ENCODE measurements at regions of chr12 and their contacts with region 1.

Region 1: GRCh38 chr12:39619660-39620433 is at the start of gene ABCD2:
- DNase-seq: peak; percentile 80 to 88 (median 85)
- H3K4me3 ChIP-seq: peak within 1 kb of the TSS; percentile 83 to 85
- H3K4me3 Mint-ChIP-seq: no peak within 1 kb of the TSS
- H3K27ac ChIP-seq: peak within 1 kb of the TSS; percentile 87
- H3K27ac Mint-ChIP-seq: no peak within 1 kb of the TSS
- H3K4me1 ChIP-seq: peaks cover 42% of the 10 kb centered on the region
- H3K4me1 Mint-ChIP-seq: peaks cover 28 to 46% (median 33%) of the 10 kb centered on the region in 4 donors
- H3K27me3 ChIP-seq: no peaks in the 10 kb centered on the region
- H3K27me3 Mint-ChIP-seq: no peaks in the 10 kb centered on the region
- total RNA-seq, gene ABCD2: 19.0 to 20.1 TPM

Region 2: GRCh38 chr12:39319187-39319586 is 300.7 kb before region 1 on chr12:
- CTCF ChIA-PET with region 1: interaction called, 3 read pairs
- POLR2A ChIA-PET with region 1: no interaction called
- intact Hi-C with region 1: loop called (anchors 2 kb)
- DNase-seq: peak in 1 of 5 donors; percentile 14
- H3K4me3 ChIP-seq: no peak overlapping the region
- H3K4me3 Mint-ChIP-seq: no peak overlapping the region
- H3K27ac ChIP-seq: no peak overlapping the region
- H3K27ac Mint-ChIP-seq: peak overlapping the region in 1 of 7 donors; percentile 47
- H3K4me1 ChIP-seq: no peaks in the 10 kb centered on the region
- H3K4me1 Mint-ChIP-seq: peaks cover 0 to 2% (median 0%) of the 10 kb centered on the region in 4 donors
- H3K27me3 ChIP-seq: no peaks in the 10 kb centered on the region
- H3K27me3 Mint-ChIP-seq: no peaks in the 10 kb centered on the region

Region 3: GRCh38 chr12:39587225-39587624 is 32.6 kb before region 1 on chr12:
- CTCF ChIA-PET with region 1: interaction called, 12 read pairs
- POLR2A ChIA-PET with region 1: interaction called, 11 read pairs
- intact Hi-C with region 1: loop called (anchors 1 kb)
- DNase-seq: peak; percentile 36 to 50 (median 40)
- H3K4me3 ChIP-seq: no peak overlapping the region
- H3K4me3 Mint-ChIP-seq: no peak overlapping the region
- H3K27ac ChIP-seq: no peak overlapping the region
- H3K27ac Mint-ChIP-seq: no peak overlapping the region
- H3K4me1 ChIP-seq: no peaks in the 10 kb centered on the region
- H3K4me1 Mint-ChIP-seq: peaks cover 3 to 7% (median 5%) of the 10 kb centered on the region in 4 donors
- H3K27me3 ChIP-seq: no peaks in the 10 kb centered on the region
- H3K27me3 Mint-ChIP-seq: no peaks in the 10 kb centered on the region

Region 4: GRCh38 chr12:39605501-39605900 is 14.3 kb before region 1 on chr12:
- CTCF ChIA-PET with region 1: interaction called, 14 read pairs
- POLR2A ChIA-PET with region 1: interaction called, 28 read pairs
- intact Hi-C with region 1: loop called (anchors 1 kb)
- DNase-seq: no peak
- H3K4me3 ChIP-seq: no peak overlapping the region
- H3K4me3 Mint-ChIP-seq: no peak overlapping the region
- H3K27ac ChIP-seq: no peak overlapping the region
- H3K27ac Mint-ChIP-seq: peak overlapping the region in 2 of 7 donors; percentile 14 to 43
- H3K4me1 ChIP-seq: peaks cover 19% of the 10 kb centered on the region
- H3K4me1 Mint-ChIP-seq: peaks cover 19 to 25% (median 22%) of the 10 kb centered on the region in 4 donors
- H3K27me3 ChIP-seq: no peaks in the 10 kb centered on the region
- H3K27me3 Mint-ChIP-seq: no peaks in the 10 kb centered on the region

Region 5: GRCh38 chr12:39671898-39672875 is 52.3 kb after region 1 on chr12:
- CTCF ChIA-PET with region 1: interaction called, 21 read pairs
- POLR2A ChIA-PET with region 1: interaction called, 91 read pairs
- intact Hi-C with region 1: loop called (anchors 2 kb)
- DNase-seq: no peak
- H3K4me3 ChIP-seq: no peak overlapping the region
- H3K4me3 Mint-ChIP-seq: peak overlapping the region in 1 of 8 donors; percentile 27
- H3K27ac ChIP-seq: no peak overlapping the region
- H3K27ac Mint-ChIP-seq: peak overlapping the region in 3 of 7 donors; percentile 11 to 72 (median 36)
- H3K4me1 ChIP-seq: peaks cover 48% of the 10 kb centered on the region
- H3K4me1 Mint-ChIP-seq: peaks cover 31 to 74% (median 50%) of the 10 kb centered on the region in 4 donors
- H3K27me3 ChIP-seq: no peaks in the 10 kb centered on the region
- H3K27me3 Mint-ChIP-seq: no peaks in the 10 kb centered on the region

Region 6: DNA sequence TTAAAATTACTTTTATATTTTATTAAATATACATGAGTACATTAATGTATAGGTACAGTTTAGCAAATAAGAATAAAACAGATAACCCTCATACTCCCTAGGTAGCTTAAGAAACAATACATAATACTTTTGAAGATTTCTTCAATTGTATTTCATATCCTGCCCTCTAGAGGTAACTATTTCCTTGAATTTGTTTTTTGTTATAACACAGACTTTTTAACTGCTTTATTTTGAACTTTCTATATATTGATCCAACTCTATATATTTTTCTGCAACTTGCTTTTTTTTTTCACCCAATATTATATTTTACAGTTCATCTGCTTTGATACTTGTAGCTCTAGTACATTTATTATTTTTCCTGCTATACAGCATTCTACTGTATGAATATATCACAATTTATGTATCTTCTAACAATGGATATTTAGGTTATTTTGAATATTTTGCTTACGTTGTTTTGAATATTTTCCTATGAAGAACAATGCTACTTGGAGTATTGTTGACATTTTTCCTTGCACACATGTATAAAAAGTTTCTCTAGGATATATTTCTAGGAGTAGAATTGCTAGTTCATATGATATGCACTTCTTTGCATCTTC is 72.5 kb after region 1 on chr12:
- CTCF ChIA-PET with region 1: interaction called, 35 read pairs
- POLR2A ChIA-PET with region 1: interaction called, 16 read pairs
- intact Hi-C with region 1: loop called (anchors 1 kb)
- DNase-seq: peak in 4 of 5 donors; percentile 30 to 41 (median 32)
- H3K4me3 ChIP-seq: no peak overlapping the region
- H3K4me3 Mint-ChIP-seq: no peak overlapping the region
- H3K27ac ChIP-seq: no peak overlapping the region
- H3K27ac Mint-ChIP-seq: no peak overlapping the region
- H3K4me1 ChIP-seq: peaks cover 10% of the 10 kb centered on the region
- H3K4me1 Mint-ChIP-seq: peaks cover 2 to 5% (median 3%) of the 10 kb centered on the region in 4 donors
- H3K27me3 ChIP-seq: no peaks in the 10 kb centered on the region
- H3K27me3 Mint-ChIP-seq: no peaks in the 10 kb centered on the region

Region 7: GRCh38 chr12:39764944-39765560 is 145.2 kb after region 1 on chr12:
- CTCF ChIA-PET with region 1: no interaction called
- POLR2A ChIA-PET with region 1: no interaction called
- intact Hi-C with region 1: no loop called
- DNase-seq: peak in 4 of 5 donors; percentile 8 to 11 (median 10)
- H3K4me3 ChIP-seq: no peak overlapping the region
- H3K4me3 Mint-ChIP-seq: no peak overlapping the region
- H3K27ac ChIP-seq: no peak overlapping the region
- H3K27ac Mint-ChIP-seq: no peak overlapping the region
- H3K4me1 ChIP-seq: no peaks in the 10 kb centered on the region
- H3K4me1 Mint-ChIP-seq: no peaks in the 10 kb centered on the region
- H3K27me3 ChIP-seq: no peaks in the 10 kb centered on the region
- H3K27me3 Mint-ChIP-seq: peaks cover 0 to 4% of the 10 kb centered on the region in 2 donors

Region 8: GRCh38 chr12:41120211-41120610 is 1500.4 kb after region 1 on chr12:
- CTCF ChIA-PET with region 1: no interaction called
- POLR2A ChIA-PET with region 1: no interaction called
- intact Hi-C with region 1: no loop called
- DNase-seq: no peak
- H3K4me3 ChIP-seq: no peak overlapping the region
- H3K4me3 Mint-ChIP-seq: no peak overlapping the region
- H3K27ac ChIP-seq: no peak overlapping the region
- H3K27ac Mint-ChIP-seq: no peak overlapping the region
- H3K4me1 ChIP-seq: no peaks in the 10 kb centered on the region
- H3K4me1 Mint-ChIP-seq: no peaks in the 10 kb centered on the region
- H3K27me3 ChIP-seq: no peaks in the 10 kb centered on the region
- H3K27me3 Mint-ChIP-seq: no peaks in the 10 kb centered on the region